ENCODE measurements at regions of chr6 and their contacts with region 1.

Region 1: GRCh38 chr6:140078561-140079125 is 704.2 kb upstream of the CITED2 start:
- DNase-seq: no peak
- ATAC-seq: peak; percentile 72 to 73
- H3K4me3 ChIP-seq: no peak overlapping the region
- H3K27ac ChIP-seq: no peak overlapping the region
- H3K4me1 ChIP-seq: no peaks in the 10 kb centered on the region
- H3K27me3 ChIP-seq: no peaks in the 10 kb centered on the region

Region 2: GRCh38 chr6:139973669-139974344 is 104.8 kb before region 1 on chr6:
- intact Hi-C with region 1: loop called in 1 of 4 experiments (anchors 10 kb)
- DNase-seq: peak in 1 of 3 donors; percentile 9
- ATAC-seq: peak; percentile 93
- H3K4me3 ChIP-seq: peak overlapping the region; percentile 28
- H3K27ac ChIP-seq: no peak overlapping the region
- H3K4me1 ChIP-seq: peaks cover 3% of the 10 kb centered on the region
- H3K27me3 ChIP-seq: no peaks in the 10 kb centered on the region

Region 3: GRCh38 chr6:140436013-140436811 is 357.6 kb after region 1 on chr6:
- intact Hi-C with region 1: no loop called
- DNase-seq: no peak
- ATAC-seq: no peak
- H3K4me3 ChIP-seq: no peak overlapping the region
- H3K27ac ChIP-seq: no peak overlapping the region
- H3K4me1 ChIP-seq: no peaks in the 10 kb centered on the region
- H3K27me3 ChIP-seq: no peaks in the 10 kb centered on the region